CD8-positive, alpha-beta memory T cell (primary cell): ENCODE measurements at regions of chr6 and their contacts with region 1.

Region 1: GRCh38 chr6:118800394-118801071 is 93.4 kb upstream of the ASF1A start:
- DNase-seq: peak; percentile 64 to 87 (median 81)
- H3K4me3 ChIP-seq: peak overlapping the region; percentile 22
- H3K4me3 Mint-ChIP-seq: peak overlapping the region; percentile 4 to 71 (median 55)
- H3K27ac ChIP-seq: no peak overlapping the region
- H3K27ac Mint-ChIP-seq: peak overlapping the region; percentile 30 to 96 (median 90)
- H3K4me1 ChIP-seq: peaks cover 27% of the 10 kb centered on the region
- H3K4me1 Mint-ChIP-seq: peaks cover 35 to 47% (median 41%) of the 10 kb centered on the region in 3 donors
- H3K27me3 ChIP-seq: no peaks in the 10 kb centered on the region
- H3K27me3 Mint-ChIP-seq: no peaks in the 10 kb centered on the region

Region 2: DNA sequence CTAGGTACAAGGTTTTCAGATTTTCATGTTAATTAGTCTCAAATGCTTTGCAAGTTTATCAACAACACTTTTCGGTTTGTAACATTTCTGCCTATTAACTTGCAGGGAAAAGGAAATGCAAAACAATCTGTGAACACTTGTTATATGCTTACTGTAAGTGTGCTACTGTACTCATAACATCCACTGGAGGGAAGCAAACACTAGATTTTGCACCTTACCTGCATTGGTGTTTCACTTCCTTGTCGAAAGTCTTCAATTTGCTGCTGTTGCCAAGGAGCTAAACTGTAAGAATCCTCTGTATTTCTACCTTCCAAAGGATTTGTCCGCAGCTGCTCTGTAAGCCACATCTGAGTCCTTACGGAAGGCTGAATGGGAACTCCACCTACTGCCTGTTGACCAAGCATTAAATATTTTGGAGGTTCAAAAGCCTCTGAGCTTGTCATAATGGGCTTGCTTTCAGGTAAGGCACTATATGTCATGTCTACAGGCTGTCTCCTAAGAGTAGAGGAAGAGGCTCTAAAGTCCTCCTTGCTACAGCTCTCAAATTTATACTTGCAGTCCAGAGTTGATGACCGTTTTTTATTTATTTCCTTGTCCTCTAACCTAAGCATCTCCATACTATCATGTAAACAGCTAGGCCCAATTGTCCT is 235.1 kb before region 1 on chr6:
- CTCF ChIA-PET with region 1: interaction called, 11 read pairs
- POLR2A ChIA-PET with region 1: no interaction called
- DNase-seq: peak in 3 of 5 donors; percentile 43 to 59 (median 47)
- H3K4me3 ChIP-seq: no peak overlapping the region
- H3K4me3 Mint-ChIP-seq: no peak overlapping the region
- H3K27ac ChIP-seq: no peak overlapping the region
- H3K27ac Mint-ChIP-seq: peak overlapping the region in 6 of 8 donors; percentile 28 to 70 (median 44)
- H3K4me1 ChIP-seq: peaks cover 5% of the 10 kb centered on the region
- H3K4me1 Mint-ChIP-seq: peaks cover 22 to 47% (median 44%) of the 10 kb centered on the region in 3 donors
- H3K27me3 ChIP-seq: no peaks in the 10 kb centered on the region
- H3K27me3 Mint-ChIP-seq: no peaks in the 10 kb centered on the region

Region 3: GRCh38 chr6:118625833-118626232 is 174.7 kb before region 1 on chr6:
- CTCF ChIA-PET with region 1: no interaction called
- POLR2A ChIA-PET with region 1: no interaction called
- DNase-seq: no peak
- H3K4me3 ChIP-seq: no peak overlapping the region
- H3K4me3 Mint-ChIP-seq: no peak overlapping the region
- H3K27ac ChIP-seq: no peak overlapping the region
- H3K27ac Mint-ChIP-seq: no peak overlapping the region
- H3K4me1 ChIP-seq: peaks cover 4% of the 10 kb centered on the region
- H3K4me1 Mint-ChIP-seq: peaks cover 48 to 86% (median 78%) of the 10 kb centered on the region in 3 donors
- H3K27me3 ChIP-seq: no peaks in the 10 kb centered on the region
- H3K27me3 Mint-ChIP-seq: no peaks in the 10 kb centered on the region

Region 4: GRCh38 chr6:118776607-118777549 is 23.7 kb before region 1 on chr6:
- CTCF ChIA-PET with region 1: interaction called, 11 read pairs
- POLR2A ChIA-PET with region 1: interaction called, 3 read pairs
- DNase-seq: peak in 4 of 5 donors; percentile 32 to 70 (median 64)
- H3K4me3 ChIP-seq: no peak overlapping the region
- H3K4me3 Mint-ChIP-seq: peak overlapping the region in 2 of 7 donors; percentile 2 to 36
- H3K27ac ChIP-seq: no peak overlapping the region
- H3K27ac Mint-ChIP-seq: peak overlapping the region; percentile 5 to 76 (median 62)
- H3K4me1 ChIP-seq: peaks cover 16% of the 10 kb centered on the region
- H3K4me1 Mint-ChIP-seq: peaks cover 14 to 24% (median 18%) of the 10 kb centered on the region in 3 donors
- H3K27me3 ChIP-seq: no peaks in the 10 kb centered on the region
- H3K27me3 Mint-ChIP-seq: peaks cover 1 to 6% of the 10 kb centered on the region in 2 donors

Region 5: DNA sequence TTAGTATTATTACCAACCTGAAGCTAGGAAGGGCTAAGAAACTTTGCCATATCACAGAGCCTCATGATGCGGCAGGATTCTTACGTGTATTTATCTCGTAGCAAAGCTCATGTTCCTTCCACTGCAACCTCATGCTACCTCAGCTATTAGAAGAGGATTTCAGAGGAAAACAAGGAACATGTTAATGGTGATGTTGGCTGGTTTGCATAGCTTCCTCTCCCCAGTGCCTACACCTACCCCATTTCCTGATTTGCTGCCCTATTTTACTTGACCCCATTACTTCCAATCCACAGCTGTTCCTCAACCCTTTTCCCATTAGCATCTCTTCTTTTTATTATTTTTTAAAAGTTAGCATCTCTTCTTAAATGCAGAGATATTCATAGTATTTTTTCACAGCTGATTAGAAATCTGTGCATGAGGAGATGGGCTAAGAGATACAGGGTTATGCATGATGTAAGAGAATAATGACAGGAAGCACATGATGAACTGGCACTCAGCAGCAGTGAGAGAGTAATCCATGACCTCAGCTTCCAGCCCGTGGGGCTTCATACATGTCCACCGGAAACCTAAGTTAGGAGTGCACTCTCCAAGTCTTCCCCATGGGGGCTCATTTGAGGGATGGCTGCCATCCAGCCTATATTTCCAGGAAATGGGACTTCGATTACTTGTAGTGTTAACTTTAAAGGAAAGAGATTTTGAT is 12.7 kb before region 1 on chr6:
- CTCF ChIA-PET with region 1: interaction called, 14 read pairs
- POLR2A ChIA-PET with region 1: no interaction called
- DNase-seq: peak in 1 of 5 donors; percentile 14
- H3K4me3 ChIP-seq: no peak overlapping the region
- H3K4me3 Mint-ChIP-seq: peak overlapping the region; percentile 3 to 72 (median 15)
- H3K27ac ChIP-seq: no peak overlapping the region
- H3K27ac Mint-ChIP-seq: peak overlapping the region; percentile 13 to 98 (median 92)
- H3K4me1 ChIP-seq: peaks cover 15% of the 10 kb centered on the region
- H3K4me1 Mint-ChIP-seq: peaks cover 27 to 44% (median 36%) of the 10 kb centered on the region in 3 donors
- H3K27me3 ChIP-seq: no peaks in the 10 kb centered on the region
- H3K27me3 Mint-ChIP-seq: no peaks in the 10 kb centered on the region